ENCODE measurements at regions of chr11 and their contacts with region 1.

Region 1: DNA sequence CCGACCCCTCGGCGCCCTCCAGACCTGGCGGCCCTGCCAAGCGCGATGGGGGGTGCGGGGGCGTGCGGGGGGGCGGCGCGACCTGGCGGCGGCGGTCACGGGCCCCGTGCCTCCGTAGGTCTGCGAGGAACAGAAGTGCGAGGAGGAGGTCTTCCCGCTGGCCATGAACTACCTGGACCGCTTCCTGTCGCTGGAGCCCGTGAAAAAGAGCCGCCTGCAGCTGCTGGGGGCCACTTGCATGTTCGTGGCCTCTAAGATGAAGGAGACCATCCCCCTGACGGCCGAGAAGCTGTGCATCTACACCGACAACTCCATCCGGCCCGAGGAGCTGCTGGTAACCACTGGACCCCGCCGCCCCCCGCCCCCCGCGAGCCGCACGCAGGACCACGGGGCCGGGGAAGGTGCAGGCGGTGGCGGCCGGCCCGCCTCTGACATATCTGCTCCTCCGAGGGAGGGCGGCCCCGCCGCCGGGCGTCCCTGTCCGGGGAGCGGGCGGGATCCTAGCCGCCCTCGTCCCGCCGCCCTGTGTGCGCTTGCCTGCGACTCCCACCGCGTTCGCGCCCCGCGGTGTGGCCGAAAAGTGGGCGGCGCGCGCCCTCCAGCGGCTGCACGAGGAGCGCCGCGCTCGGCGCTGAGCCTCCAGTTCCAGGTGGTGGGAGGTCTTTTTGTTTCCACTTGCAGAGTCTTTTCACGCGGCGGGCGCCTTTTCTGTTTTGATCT is 2.1 kb downstream of the CCND1 start:
- DNase-seq: peak; percentile 86
- H3K4me3 ChIP-seq: peak overlapping the region; percentile 40 to 79 (median 70)
- H3K27ac ChIP-seq: peak overlapping the region; percentile 79 to 92 (median 86)
- H3K4me1 ChIP-seq: peaks cover 0 to 73% (median 70%) of the 10 kb centered on the region in 4 donors
- H3K27me3 ChIP-seq: peaks cover 34 to 57% (median 55%) of the 10 kb centered on the region in 3 donors
- CTCF ChIP-seq: peak; percentile 61 to 93 (median 72)
- EP300 ChIP-seq: no peak
- POLR2A ChIP-seq: no peak

Region 2: GRCh38 chr11:69088676-69089146 is 554.4 kb before region 1 on chr11:
- intact Hi-C with region 1: loop called (anchors 5 kb)
- DNase-seq: peak; percentile 89
- H3K4me3 ChIP-seq: no peak overlapping the region
- H3K27ac ChIP-seq: peak overlapping the region; percentile 82 to 90 (median 86)
- H3K4me1 ChIP-seq: peaks cover 0 to 42% (median 36%) of the 10 kb centered on the region in 4 donors
- H3K27me3 ChIP-seq: no peaks in the 10 kb centered on the region
- CTCF ChIP-seq: peak; percentile 67 to 76 (median 72)
- EP300 ChIP-seq: no peak
- POLR2A ChIP-seq: no peak

Region 3: GRCh38 chr11:69131644-69132300 is 511.3 kb before region 1 on chr11:
- intact Hi-C with region 1: loop called (anchors 2 kb)
- DNase-seq: no peak
- H3K4me3 ChIP-seq: no peak overlapping the region
- H3K27ac ChIP-seq: no peak overlapping the region
- H3K4me1 ChIP-seq: peaks cover 0 to 15% (median 7%) of the 10 kb centered on the region in 4 donors
- H3K27me3 ChIP-seq: no peaks in the 10 kb centered on the region
- CTCF ChIP-seq: peak; percentile 55 to 84 (median 78)
- EP300 ChIP-seq: no peak
- POLR2A ChIP-seq: no peak

Region 4: DNA sequence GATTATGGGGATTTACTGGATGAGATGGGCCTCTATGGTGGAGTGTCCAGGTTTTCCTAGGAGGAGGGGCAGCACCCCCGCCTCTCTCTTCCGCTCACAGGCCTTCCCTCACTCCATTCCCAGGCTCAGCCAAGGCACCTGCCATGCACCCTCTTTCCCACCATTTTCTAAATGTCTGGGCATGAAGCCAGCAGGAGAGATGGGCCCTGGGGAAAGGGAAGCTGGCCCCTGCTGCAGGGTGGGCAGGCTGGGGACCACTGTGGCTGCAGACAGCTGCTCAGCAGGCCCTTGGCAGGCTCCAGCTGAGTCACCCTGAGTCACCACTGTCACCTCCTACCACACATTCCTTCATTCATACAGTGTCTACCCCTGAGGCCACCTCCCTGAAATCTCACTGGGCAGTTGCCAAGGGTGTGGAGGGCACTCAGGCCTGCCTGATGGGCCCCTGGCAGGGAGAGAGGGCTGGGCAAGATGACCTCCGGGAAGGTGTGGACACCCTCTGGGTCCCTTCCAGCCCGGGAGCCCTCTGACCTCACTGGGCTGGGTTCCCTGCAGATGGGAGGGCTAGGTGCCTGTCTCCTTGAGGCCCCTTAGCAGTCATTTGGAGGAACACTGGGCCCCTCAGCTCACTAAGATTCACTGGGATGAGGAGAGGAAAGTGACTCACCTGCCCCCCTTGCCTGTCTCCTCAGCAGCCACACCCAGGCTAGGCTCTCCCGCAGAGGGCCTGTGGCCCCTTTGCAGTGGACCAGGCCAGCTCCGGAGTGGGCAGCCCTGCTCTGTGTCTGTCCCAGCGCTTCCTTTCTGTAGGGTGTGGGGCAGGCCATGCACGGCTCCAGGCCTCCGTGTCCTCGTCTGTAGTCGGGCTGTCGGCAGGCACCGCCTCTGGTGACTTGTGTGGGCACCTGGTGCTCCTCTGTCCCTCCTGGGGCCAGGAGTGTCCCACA is 341.3 kb before region 1 on chr11:
- intact Hi-C with region 1: no loop called
- DNase-seq: no peak
- H3K4me3 ChIP-seq: no peak overlapping the region
- H3K27ac ChIP-seq: no peak overlapping the region
- H3K4me1 ChIP-seq: peaks cover 0 to 35% (median 25%) of the 10 kb centered on the region in 4 donors
- H3K27me3 ChIP-seq: no peaks in the 10 kb centered on the region
- CTCF ChIP-seq: no peak
- EP300 ChIP-seq: no peak
- POLR2A ChIP-seq: no peak

Region 5: DNA sequence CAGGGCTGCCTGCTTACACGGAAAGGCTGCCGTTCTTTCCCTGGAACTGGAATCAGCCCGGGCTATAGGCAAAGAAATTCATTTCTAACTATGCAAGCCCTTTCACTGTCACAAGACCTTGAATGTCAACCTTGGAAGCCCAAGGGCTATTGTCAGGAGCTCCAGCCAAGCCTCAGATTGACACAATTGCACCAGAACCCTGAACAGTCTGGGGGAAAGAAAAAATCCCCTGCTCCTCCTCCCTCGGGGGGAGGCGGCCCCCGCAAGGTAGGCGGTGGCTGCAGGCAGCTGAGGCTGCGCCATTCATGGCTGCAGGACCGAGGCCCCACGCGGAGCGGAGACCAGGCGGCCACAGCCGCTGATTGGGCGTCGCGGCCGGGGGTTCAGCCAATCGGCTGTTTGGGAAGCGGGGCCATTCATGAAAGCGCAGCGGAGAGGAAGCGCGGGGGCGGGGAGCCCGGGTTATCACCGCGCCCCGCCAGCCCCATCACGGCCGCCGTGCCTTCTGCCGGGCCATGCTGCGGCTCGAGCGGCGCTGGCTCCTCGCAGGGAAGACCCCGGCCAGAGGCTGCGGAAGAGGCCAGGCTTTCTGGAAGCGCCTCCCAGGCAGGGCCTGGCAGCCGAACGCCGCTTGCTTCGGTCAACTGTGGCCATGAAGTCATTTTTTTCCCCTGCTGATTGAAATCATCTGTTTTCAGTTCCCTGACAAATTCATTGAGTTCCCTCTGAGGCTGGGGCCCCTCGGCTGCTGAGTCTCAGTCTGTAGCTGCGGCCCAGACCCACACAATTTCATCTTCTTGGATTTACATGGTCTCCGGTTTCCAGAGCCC is 199.7 kb before region 1 on chr11:
- intact Hi-C with region 1: loop called (anchors 5 kb)
- DNase-seq: peak; percentile 94
- H3K4me3 ChIP-seq: peak overlapping the region; percentile 21 to 47 (median 42)
- H3K27ac ChIP-seq: peak overlapping the region; percentile 74 to 82 (median 78)
- H3K4me1 ChIP-seq: peaks cover 0 to 29% (median 24%) of the 10 kb centered on the region in 4 donors
- H3K27me3 ChIP-seq: no peaks in the 10 kb centered on the region
- CTCF ChIP-seq: no peak
- EP300 ChIP-seq: no peak
- POLR2A ChIP-seq: peak; percentile 17 to 19

Measured in sigmoid colon (tissue), 7 donors.